ENCODE measurements at regions of chr12 and their contacts with region 1.

Region 1: DNA sequence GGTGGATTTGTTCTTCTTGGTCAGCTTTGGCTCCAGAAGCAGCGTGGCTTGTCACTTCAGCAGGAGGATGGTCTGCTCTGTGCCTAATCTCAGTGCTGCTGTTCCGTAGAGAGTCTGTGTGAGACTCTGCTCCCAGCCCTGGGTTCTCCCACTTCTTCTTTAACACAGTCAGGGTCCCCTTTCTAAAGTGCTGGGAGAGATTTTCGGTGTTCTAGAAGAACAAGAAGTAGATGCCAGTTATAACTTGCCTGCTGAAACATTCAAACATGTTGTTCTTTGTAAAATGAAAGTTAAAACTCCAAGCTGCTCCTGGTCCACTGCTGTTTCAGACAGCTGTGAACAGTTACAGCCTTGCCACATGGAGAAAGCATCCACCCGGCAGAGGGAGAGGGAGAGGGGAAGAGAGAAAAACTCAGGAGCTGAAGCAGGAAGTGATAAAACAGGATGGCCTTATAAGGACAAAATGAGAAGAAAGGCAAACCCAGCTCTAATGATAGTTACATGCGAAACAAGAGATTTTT is 55.2 kb upstream of the CERS5 start:
- DNase-seq: peak; percentile 39
- H3K4me3 Mint-ChIP-seq: no peak overlapping the region
- H3K27ac Mint-ChIP-seq: no peak overlapping the region
- H3K4me1 Mint-ChIP-seq: peaks cover 36% of the 10 kb centered on the region
- H3K27me3 Mint-ChIP-seq: no peaks in the 10 kb centered on the region

Region 2: GRCh38 chr12:50167041-50167828 is 55.1 kb before region 1 on chr12 and contains the start of gene CERS5:
- CTCF ChIA-PET with region 1: no interaction called
- POLR2A ChIA-PET with region 1: interaction called, 14 read pairs
- intact Hi-C with region 1: no loop called
- DNase-seq: peak; percentile 99
- H3K4me3 Mint-ChIP-seq: peak within 1 kb of the TSS; percentile 84
- H3K27ac Mint-ChIP-seq: peak within 1 kb of the TSS; percentile 94
- H3K4me1 Mint-ChIP-seq: peaks cover 28% of the 10 kb centered on the region
- H3K27me3 Mint-ChIP-seq: no peaks in the 10 kb centered on the region
- total RNA-seq, gene CERS5: 59.5 to 63.0 TPM

Region 3: GRCh38 chr12:50195832-50196231 is 26.5 kb before region 1 on chr12:
- CTCF ChIA-PET with region 1: no interaction called
- POLR2A ChIA-PET with region 1: no interaction called
- intact Hi-C with region 1: no loop called
- DNase-seq: no peak
- H3K4me3 Mint-ChIP-seq: no peak overlapping the region
- H3K27ac Mint-ChIP-seq: no peak overlapping the region
- H3K4me1 Mint-ChIP-seq: peaks cover 2% of the 10 kb centered on the region
- H3K27me3 Mint-ChIP-seq: no peaks in the 10 kb centered on the region

Region 4: GRCh38 chr12:50211392-50212070 is 10.8 kb before region 1 on chr12:
- CTCF ChIA-PET with region 1: interaction called, 5 read pairs
- POLR2A ChIA-PET with region 1: interaction called, 13 read pairs
- intact Hi-C with region 1: no loop called
- DNase-seq: no peak
- H3K4me3 Mint-ChIP-seq: peak overlapping the region; percentile 47
- H3K27ac Mint-ChIP-seq: peak overlapping the region; percentile 91
- H3K4me1 Mint-ChIP-seq: peaks cover 38% of the 10 kb centered on the region
- H3K27me3 Mint-ChIP-seq: no peaks in the 10 kb centered on the region

Region 5: GRCh38 chr12:50257686-50258551 is 35.6 kb after region 1 on chr12:
- CTCF ChIA-PET with region 1: interaction called, 3 read pairs
- POLR2A ChIA-PET with region 1: interaction called, 11 read pairs
- intact Hi-C with region 1: no loop called
- DNase-seq: no peak
- H3K4me3 Mint-ChIP-seq: no peak overlapping the region
- H3K27ac Mint-ChIP-seq: no peak overlapping the region
- H3K4me1 Mint-ChIP-seq: peaks cover 24% of the 10 kb centered on the region
- H3K27me3 Mint-ChIP-seq: no peaks in the 10 kb centered on the region

Region 6: GRCh38 chr12:50333441-50333840 is 111.1 kb after region 1 on chr12:
- CTCF ChIA-PET with region 1: no interaction called
- POLR2A ChIA-PET with region 1: no interaction called
- intact Hi-C with region 1: no loop called
- DNase-seq: no peak
- H3K4me3 Mint-ChIP-seq: no peak overlapping the region
- H3K27ac Mint-ChIP-seq: no peak overlapping the region
- H3K4me1 Mint-ChIP-seq: no peaks in the 10 kb centered on the region
- H3K27me3 Mint-ChIP-seq: no peaks in the 10 kb centered on the region

Region 7: DNA sequence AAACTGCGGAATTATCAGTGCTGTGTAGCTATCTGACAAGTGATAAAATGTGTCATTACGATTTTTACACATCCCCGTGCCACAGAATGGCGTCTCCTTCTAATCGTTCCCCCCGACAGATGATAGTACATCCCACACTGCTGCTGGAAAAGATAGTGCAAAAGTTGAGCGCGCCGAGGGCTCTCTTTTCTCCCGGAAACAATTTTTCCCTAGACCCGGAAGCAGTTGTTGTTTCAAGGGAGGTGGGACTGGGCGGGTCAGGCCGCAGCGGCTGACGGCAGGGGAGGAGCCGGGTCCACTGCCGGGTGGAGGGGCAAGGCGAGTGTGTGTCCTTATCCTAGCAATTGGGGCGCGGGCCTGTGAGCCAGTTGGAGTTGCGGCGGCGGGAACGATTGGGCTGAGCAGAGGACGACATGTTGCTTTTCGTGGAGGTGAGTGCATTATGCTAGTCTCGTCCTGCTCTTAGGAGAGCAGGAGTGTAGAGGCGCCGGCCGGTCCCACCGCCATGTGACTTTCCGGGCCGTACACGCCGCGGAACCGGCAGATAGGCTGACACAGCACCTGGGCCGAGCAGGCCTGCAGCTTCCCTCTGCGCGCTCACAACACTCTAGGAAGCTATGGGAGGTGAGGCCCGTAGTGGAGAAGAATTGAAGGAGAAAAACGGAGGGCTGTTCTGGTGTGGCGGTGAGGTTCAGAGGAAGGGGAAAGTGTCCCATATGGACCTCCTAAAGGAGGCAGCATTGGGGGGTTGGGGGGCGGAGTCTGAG is 178.4 kb after region 1 on chr12 and contains the start of gene LARP4:
- CTCF ChIA-PET with region 1: no interaction called
- POLR2A ChIA-PET with region 1: interaction called, 6 read pairs
- intact Hi-C with region 1: loop called (anchors 5 kb)
- DNase-seq: peak; percentile 95
- H3K4me3 Mint-ChIP-seq: peak within 1 kb of the TSS; percentile 91
- H3K27ac Mint-ChIP-seq: peak within 1 kb of the TSS; percentile 95
- H3K4me1 Mint-ChIP-seq: peaks cover 23% of the 10 kb centered on the region
- H3K27me3 Mint-ChIP-seq: no peaks in the 10 kb centered on the region
- total RNA-seq, gene LARP4: 62.2 to 64.0 TPM

Measured in activated CD4-positive, alpha-beta memory T cell treated with anti-CD3 and anti-CD28 coated beads for 36 hours (primary cell).